B cell (primary cell): ENCODE measurements at regions of chr11 and their contacts with region 1.

Region 1: GRCh38 chr11:32068134-32068870 is 22.6 kb upstream of the RCN1 start:
- DNase-seq: no peak
- ATAC-seq: no peak
- H3K4me3 ChIP-seq: no peak overlapping the region
- H3K4me3 Mint-ChIP-seq: no peak overlapping the region
- H3K27ac ChIP-seq: no peak overlapping the region
- H3K27ac Mint-ChIP-seq: no peak overlapping the region
- H3K4me1 ChIP-seq: no peaks in the 10 kb centered on the region
- H3K4me1 Mint-ChIP-seq: no peaks in the 10 kb centered on the region
- H3K27me3 ChIP-seq: peaks cover 0 to 4% (median 0%) of the 10 kb centered on the region in 4 experiments
- H3K27me3 Mint-ChIP-seq: peaks cover 40% of the 10 kb centered on the region
- CTCF ChIP-seq: no peak

Region 2: GRCh38 chr11:32023370-32024305 is 44.7 kb before region 1 on chr11:
- CTCF ChIA-PET with region 1: no interaction called
- POLR2A ChIA-PET with region 1: no interaction called
- intact Hi-C with region 1: no loop called
- DNase-seq: no peak
- ATAC-seq: no peak
- H3K4me3 ChIP-seq: no peak overlapping the region
- H3K4me3 Mint-ChIP-seq: no peak overlapping the region
- H3K27ac ChIP-seq: no peak overlapping the region
- H3K27ac Mint-ChIP-seq: no peak overlapping the region
- H3K4me1 ChIP-seq: no peaks in the 10 kb centered on the region
- H3K4me1 Mint-ChIP-seq: no peaks in the 10 kb centered on the region
- H3K27me3 ChIP-seq: no peaks in the 10 kb centered on the region
- H3K27me3 Mint-ChIP-seq: no peaks in the 10 kb centered on the region
- CTCF ChIP-seq: no peak

Region 3: GRCh38 chr11:32052218-32052617 is 16.1 kb before region 1 on chr11:
- CTCF ChIA-PET with region 1: interaction called, 14 read pairs
- POLR2A ChIA-PET with region 1: no interaction called
- intact Hi-C with region 1: no loop called
- DNase-seq: peak; percentile 55
- ATAC-seq: no peak
- H3K4me3 ChIP-seq: no peak overlapping the region
- H3K4me3 Mint-ChIP-seq: no peak overlapping the region
- H3K27ac ChIP-seq: no peak overlapping the region
- H3K27ac Mint-ChIP-seq: no peak overlapping the region
- H3K4me1 ChIP-seq: no peaks in the 10 kb centered on the region
- H3K4me1 Mint-ChIP-seq: no peaks in the 10 kb centered on the region
- H3K27me3 ChIP-seq: peaks cover 0 to 6% (median 3%) of the 10 kb centered on the region in 4 experiments
- H3K27me3 Mint-ChIP-seq: peaks cover 46% of the 10 kb centered on the region
- CTCF ChIP-seq: peak; percentile 87

Region 4: DNA sequence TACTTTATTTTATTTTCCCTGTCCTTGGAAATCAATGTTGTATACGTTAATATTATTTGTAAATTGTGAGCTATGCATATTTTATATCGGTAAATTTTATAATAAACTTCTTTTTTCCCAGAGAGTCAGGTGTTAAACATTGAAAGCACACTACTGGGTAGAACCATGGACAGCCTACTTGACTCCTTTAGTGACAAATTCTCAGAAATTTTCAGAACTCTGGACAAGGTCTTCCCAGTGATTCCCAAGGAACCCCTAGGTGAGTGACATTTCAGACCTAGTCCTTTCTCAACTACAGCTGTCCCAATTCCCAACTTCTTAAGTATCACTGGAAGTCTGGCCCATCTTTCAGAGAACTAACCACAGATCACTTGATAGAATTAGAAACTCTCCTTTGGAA is 129.8 kb after region 1 on chr11:
- CTCF ChIA-PET with region 1: no interaction called
- POLR2A ChIA-PET with region 1: no interaction called
- intact Hi-C with region 1: no loop called
- DNase-seq: no peak
- ATAC-seq: no peak
- H3K4me3 ChIP-seq: no peak overlapping the region
- H3K4me3 Mint-ChIP-seq: no peak overlapping the region
- H3K27ac ChIP-seq: no peak overlapping the region
- H3K27ac Mint-ChIP-seq: no peak overlapping the region
- H3K4me1 ChIP-seq: no peaks in the 10 kb centered on the region
- H3K4me1 Mint-ChIP-seq: no peaks in the 10 kb centered on the region
- H3K27me3 ChIP-seq: no peaks in the 10 kb centered on the region
- H3K27me3 Mint-ChIP-seq: peaks cover 9% of the 10 kb centered on the region
- CTCF ChIP-seq: no peak

Region 5: GRCh38 chr11:32310199-32310571 is 241.9 kb after region 1 on chr11:
- CTCF ChIA-PET with region 1: no interaction called
- POLR2A ChIA-PET with region 1: no interaction called
- intact Hi-C with region 1: no loop called
- DNase-seq: no peak
- ATAC-seq: no peak
- H3K4me3 ChIP-seq: no peak overlapping the region
- H3K4me3 Mint-ChIP-seq: no peak overlapping the region
- H3K27ac ChIP-seq: no peak overlapping the region
- H3K27ac Mint-ChIP-seq: no peak overlapping the region
- H3K4me1 ChIP-seq: no peaks in the 10 kb centered on the region
- H3K4me1 Mint-ChIP-seq: no peaks in the 10 kb centered on the region
- H3K27me3 ChIP-seq: no peaks in the 10 kb centered on the region
- H3K27me3 Mint-ChIP-seq: peaks cover 5% of the 10 kb centered on the region
- CTCF ChIP-seq: no peak

Region 6: DNA sequence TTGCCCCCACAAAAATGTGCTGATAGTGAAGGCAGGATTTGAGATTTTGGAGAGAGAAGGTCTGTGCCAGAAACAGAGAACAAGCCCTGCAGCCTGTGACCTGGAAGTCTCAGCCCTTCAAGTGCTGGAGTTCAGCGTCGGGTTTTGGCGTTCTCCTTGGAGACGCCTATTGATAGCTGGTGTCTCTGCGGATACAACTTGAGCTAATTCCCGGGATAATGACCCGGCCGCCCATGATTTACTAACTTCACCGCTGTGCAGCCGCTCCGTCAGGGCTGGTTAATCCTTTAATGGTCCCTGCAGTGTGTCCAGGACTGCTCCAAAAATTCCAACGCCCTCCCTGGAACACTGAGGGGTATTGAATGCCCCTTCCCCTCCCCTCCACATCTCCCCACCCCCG is 290.4 kb after region 1 on chr11:
- CTCF ChIA-PET with region 1: no interaction called
- POLR2A ChIA-PET with region 1: no interaction called
- intact Hi-C with region 1: no loop called
- DNase-seq: no peak
- ATAC-seq: no peak
- H3K4me3 ChIP-seq: no peak overlapping the region
- H3K4me3 Mint-ChIP-seq: no peak overlapping the region
- H3K27ac ChIP-seq: no peak overlapping the region
- H3K27ac Mint-ChIP-seq: no peak overlapping the region
- H3K4me1 ChIP-seq: no peaks in the 10 kb centered on the region
- H3K4me1 Mint-ChIP-seq: no peaks in the 10 kb centered on the region
- H3K27me3 ChIP-seq: no peaks in the 10 kb centered on the region
- H3K27me3 Mint-ChIP-seq: peaks cover 10% of the 10 kb centered on the region
- CTCF ChIP-seq: no peak